ENCODE measurements at regions of chr19 and their contacts with region 1.

Region 1: GRCh38 chr19:36172852-36173251 is 20.6 kb upstream of the COX7A1 start:
- DNase-seq: no peak
- H3K4me3 ChIP-seq: no peak overlapping the region
- H3K27ac ChIP-seq: no peak overlapping the region
- H3K4me1 ChIP-seq: no peaks in the 10 kb centered on the region
- H3K27me3 ChIP-seq: no peaks in the 10 kb centered on the region
- CTCF ChIP-seq: no peak
- POLR2A ChIP-seq: no peak

Region 2: GRCh38 chr19:36128392-36128736 is 44.5 kb before region 1 on chr19:
- intact Hi-C with region 1: loop called (anchors 5 kb)
- DNase-seq: no peak
- H3K4me3 ChIP-seq: peak overlapping the region; percentile 36 to 44
- H3K27ac ChIP-seq: peak overlapping the region; percentile 90 to 91
- H3K4me1 ChIP-seq: no peaks in the 10 kb centered on the region
- H3K27me3 ChIP-seq: no peaks in the 10 kb centered on the region
- CTCF ChIP-seq: no peak
- POLR2A ChIP-seq: no peak